Mammary epithelial cell (primary cell): ENCODE measurements at regions of chr10 and their contacts with region 1.

Region 1: DNA sequence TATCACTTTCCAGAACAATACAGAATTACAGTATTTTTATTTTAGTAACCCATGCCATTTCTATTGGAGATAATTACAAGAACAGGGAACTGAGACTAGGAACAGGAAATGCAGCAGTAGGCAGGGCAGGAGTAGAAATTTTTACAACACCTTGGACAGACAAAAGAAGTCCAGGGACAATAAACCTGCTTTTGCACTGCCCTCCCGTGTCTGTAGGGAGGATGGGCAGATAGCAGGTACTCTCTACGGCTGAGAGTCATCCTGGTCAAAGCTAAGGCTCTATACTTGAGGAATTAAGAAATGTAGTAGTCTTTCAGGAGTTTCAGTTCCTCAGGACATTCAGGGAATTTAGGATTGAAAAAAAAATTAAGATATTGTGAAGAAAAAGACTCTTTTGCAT is 63.4 kb downstream of the VAX1 start:
- DNase-seq: peak; percentile 16
- H3K4me3 ChIP-seq: no peak overlapping the region
- H3K27ac ChIP-seq: no peak overlapping the region
- H3K4me1 ChIP-seq: no peaks in the 10 kb centered on the region
- H3K27me3 ChIP-seq: peaks cover 2% of the 10 kb centered on the region
- CTCF ChIP-seq: peak in 1 of 2 donors; percentile 48

Region 2: DNA sequence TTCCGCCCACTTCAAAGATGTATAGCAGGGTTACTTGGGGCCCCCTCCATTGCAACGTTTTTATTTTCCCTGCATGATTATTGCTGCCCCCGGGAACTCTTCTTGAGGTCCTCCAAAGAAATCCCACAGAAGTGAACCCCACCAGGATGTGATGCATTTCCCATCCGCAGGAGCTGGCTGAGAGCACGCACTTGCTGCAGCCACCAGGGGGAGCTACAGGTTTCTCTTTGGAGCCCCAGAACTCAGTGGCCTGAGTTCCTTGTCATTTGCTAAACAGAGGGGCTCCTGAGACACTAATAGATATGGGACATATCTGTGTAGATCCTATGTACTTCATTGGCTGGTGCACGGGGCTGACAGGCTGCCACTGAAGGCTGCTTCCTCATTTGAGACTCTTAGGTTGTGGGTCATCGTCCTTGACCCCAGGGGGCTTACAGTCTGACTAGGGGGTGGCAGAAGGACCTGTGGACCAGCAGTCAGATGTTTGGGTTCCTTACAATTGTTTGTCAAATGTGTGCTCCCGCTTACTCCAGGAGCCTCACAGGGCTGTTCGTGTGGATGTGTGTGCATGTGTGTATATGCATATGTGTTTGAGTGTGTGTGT is 277.6 kb before region 1 on chr10:
- CTCF ChIA-PET with region 1: no interaction called
- dilution Hi-C with region 1: no loop called
- in situ Hi-C with region 1: loop called in 1 of 2 experiments (anchors 10 kb)
- intact Hi-C with region 1: loop called (anchors 1 kb)
- DNase-seq: peak; percentile 40
- H3K4me3 ChIP-seq: no peak overlapping the region
- H3K27ac ChIP-seq: no peak overlapping the region
- H3K4me1 ChIP-seq: no peaks in the 10 kb centered on the region
- H3K27me3 ChIP-seq: no peaks in the 10 kb centered on the region
- CTCF ChIP-seq: peak; percentile 89 to 96

Region 3: DNA sequence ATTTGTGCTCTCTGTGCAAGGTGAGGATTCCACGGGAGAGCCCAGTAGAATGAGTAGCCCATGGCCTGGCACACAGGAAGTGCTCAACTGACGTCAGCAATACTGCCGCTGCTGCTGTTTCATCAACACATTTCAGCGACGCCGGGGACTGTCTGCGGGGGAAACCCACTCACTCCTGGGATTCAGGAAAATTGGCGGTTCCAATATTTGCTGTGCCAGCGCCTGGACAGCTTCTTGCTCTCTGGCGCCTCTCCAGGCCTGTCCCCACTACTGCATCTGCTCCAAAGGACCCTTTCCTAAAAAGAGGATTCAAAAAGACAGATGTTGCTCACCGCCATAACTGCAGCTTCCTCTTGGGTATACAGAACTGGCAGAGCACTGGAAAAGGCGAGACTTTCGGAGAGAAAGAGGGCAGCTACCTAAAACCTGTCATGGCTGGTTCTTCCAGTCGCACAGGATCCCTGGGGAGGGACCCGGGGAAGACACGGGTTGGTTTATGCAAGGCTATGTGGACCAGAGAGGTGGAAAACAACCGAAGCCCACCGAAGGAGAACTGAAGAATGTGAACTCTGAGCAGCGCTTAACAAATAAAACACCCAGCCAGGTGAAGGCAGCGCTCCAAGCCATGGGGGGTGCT is 265.0 kb before region 1 on chr10:
- CTCF ChIA-PET with region 1: no interaction called
- dilution Hi-C with region 1: no loop called
- in situ Hi-C with region 1: loop called in 1 of 2 experiments (anchors 10 kb)
- intact Hi-C with region 1: no loop called
- DNase-seq: peak; percentile 34
- H3K4me3 ChIP-seq: peak overlapping the region; percentile 40 to 47 (median 41)
- H3K27ac ChIP-seq: no peak overlapping the region
- H3K4me1 ChIP-seq: peaks cover 4% of the 10 kb centered on the region
- H3K27me3 ChIP-seq: no peaks in the 10 kb centered on the region
- CTCF ChIP-seq: peak; percentile 50 to 60

Region 4: DNA sequence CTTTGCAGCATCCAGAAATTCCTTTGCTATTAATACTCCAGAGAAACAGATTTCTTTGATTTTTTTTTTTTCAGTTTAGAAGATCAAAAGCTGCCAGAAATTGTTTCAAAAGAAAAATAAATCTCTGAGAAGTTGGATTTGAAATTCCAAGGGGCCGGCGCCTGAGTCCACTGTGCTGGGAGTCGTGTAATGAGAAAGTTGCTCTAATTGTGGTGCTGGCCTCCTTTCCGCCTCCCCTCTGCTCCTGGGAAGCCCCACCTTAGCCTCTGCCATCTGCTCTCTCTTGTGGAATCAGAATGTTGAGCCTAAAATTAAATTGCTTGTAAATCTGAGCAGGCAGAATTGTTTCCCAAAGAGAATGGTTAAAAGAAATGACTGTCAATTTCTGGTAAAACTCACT is 561.2 kb after region 1 on chr10:
- CTCF ChIA-PET with region 1: no interaction called
- dilution Hi-C with region 1: no loop called
- in situ Hi-C with region 1: no loop called
- intact Hi-C with region 1: no loop called
- DNase-seq: no peak
- H3K4me3 ChIP-seq: no peak overlapping the region
- H3K27ac ChIP-seq: no peak overlapping the region
- H3K4me1 ChIP-seq: no peaks in the 10 kb centered on the region
- H3K27me3 ChIP-seq: peaks cover 6% of the 10 kb centered on the region
- CTCF ChIP-seq: no peak